Activated CD4-positive, alpha-beta T cell treated with anti-CD3 and anti-CD28 coated beads for 36 hours (primary cell): ENCODE measurements at regions of chr16 and their contacts with region 1.

Region 1: DNA sequence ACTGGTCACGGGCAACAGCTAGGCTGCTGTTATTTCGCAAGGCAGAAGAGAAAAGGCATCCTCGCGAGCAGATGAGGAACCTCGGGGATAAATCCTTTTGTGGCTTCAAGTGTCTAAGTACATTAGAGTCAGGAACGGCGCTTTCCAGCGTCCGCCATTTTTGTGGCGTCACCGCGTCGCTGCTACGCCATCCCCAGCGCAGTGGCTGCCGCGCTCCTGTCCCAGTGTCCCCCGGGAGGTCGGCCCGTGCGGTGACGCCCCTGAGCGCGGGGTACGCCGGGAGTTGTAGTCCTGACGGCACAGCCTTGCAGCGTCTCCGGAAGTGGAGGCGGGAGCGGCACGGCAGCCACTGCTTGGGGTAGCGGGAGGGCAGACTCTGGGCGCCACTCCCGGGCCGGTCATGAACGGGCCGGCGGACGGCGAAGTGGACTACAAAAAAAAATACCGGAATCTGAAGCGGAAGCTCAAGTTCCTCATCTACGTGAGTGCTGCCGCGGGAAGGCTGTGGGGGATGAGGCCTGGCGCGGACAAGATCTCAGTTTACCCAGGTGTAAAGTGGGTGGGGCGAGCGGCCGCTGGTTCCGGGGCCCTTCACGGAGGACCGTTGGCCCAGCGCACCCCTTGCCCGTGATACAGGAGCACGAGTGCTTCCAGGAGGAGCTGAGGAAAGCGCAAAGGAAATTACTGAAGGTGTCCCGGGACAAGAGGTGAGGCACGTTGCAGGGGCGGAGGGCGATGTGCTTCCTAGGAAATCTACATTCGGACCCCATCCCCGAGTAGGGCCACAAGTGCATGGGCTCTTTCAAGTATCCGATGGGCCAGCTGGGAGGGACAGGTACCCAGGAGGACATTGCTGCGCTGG is at the start of gene INO80E:
- DNase-seq: peak; percentile 100
- ATAC-seq: peak; percentile 98
- H3K4me3 Mint-ChIP-seq: peak within 1 kb of the TSS; percentile 96
- H3K27ac Mint-ChIP-seq: peak within 1 kb of the TSS; percentile 98
- H3K4me1 Mint-ChIP-seq: peaks cover 25% of the 10 kb centered on the region
- H3K27me3 Mint-ChIP-seq: no peaks in the 10 kb centered on the region
- total RNA-seq, gene INO80E: 80.1 to 106 TPM

Region 2: DNA sequence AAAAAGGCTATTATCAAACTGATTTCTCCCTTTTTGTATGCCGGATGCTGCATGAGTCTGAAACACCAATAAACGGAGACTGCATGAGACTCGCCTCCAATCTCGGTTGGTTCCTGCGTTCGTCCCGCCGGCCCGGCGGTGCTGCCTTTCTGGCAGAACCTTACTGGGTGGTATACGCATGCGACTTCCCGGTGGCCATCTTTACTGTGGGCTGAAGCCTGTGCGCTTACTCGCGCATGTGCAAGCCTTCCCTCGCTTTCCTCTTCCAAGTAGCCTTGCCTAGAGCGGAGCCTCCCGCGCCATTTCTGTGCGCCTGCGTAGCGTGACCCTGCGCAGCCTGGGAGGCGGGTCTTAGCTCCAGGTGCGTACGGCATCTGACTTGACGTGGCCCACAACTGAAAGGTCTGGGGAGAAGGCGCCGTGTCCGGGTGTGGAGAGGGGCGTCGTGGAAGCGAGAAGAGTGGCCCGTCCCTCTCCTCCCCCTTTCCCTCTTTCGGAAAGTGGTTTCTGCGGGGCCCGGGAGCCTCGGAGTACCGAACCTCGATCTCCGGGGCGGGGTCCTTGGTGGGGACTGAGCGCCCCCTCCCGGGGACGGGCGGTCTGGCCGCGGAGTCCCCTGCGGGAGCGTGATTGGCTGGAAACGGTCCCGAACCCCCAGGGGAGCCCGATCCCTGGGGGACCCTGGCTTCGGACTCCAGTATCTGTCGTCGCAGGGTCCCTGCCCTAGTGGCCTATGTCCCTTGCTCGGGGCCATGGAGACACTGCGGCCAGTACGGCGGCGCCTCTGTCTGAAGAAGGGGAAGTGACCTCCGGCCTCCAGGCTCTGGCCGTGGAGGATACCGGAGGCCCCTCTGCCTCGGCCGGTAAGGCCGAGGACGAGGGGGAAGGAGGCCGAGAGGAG is 180.1 kb before region 1 on chr16 and contains the start of gene PAGR1:
- CTCF ChIA-PET with region 1: no interaction called
- POLR2A ChIA-PET with region 1: interaction called, 3 read pairs
- intact Hi-C with region 1: loop called (anchors 1 to 10 kb)
- DNase-seq: peak; percentile 99
- ATAC-seq: peak; percentile 72
- H3K4me3 Mint-ChIP-seq: peak within 1 kb of the TSS; percentile 84
- H3K27ac Mint-ChIP-seq: peak within 1 kb of the TSS; percentile 97
- H3K4me1 Mint-ChIP-seq: peaks cover 57% of the 10 kb centered on the region
- H3K27me3 Mint-ChIP-seq: no peaks in the 10 kb centered on the region
- total RNA-seq, gene PAGR1: 20.6 to 25.6 TPM

Region 3: GRCh38 chr16:29900102-29900887 is 95.8 kb before region 1 on chr16 and contains the start of gene ASPHD1:
- CTCF ChIA-PET with region 1: no interaction called
- POLR2A ChIA-PET with region 1: no interaction called
- intact Hi-C with region 1: loop called in 1 of 2 experiments (anchors 1 kb)
- DNase-seq: peak; percentile 84
- ATAC-seq: peak; percentile 92
- H3K4me3 Mint-ChIP-seq: peak within 1 kb of the TSS; percentile 74
- H3K27ac Mint-ChIP-seq: peak within 1 kb of the TSS; percentile 38
- H3K4me1 Mint-ChIP-seq: peaks cover 13% of the 10 kb centered on the region
- H3K27me3 Mint-ChIP-seq: peaks cover 21% of the 10 kb centered on the region
- total RNA-seq, gene ASPHD1: 2.7 to 3.2 TPM

Region 4: DNA sequence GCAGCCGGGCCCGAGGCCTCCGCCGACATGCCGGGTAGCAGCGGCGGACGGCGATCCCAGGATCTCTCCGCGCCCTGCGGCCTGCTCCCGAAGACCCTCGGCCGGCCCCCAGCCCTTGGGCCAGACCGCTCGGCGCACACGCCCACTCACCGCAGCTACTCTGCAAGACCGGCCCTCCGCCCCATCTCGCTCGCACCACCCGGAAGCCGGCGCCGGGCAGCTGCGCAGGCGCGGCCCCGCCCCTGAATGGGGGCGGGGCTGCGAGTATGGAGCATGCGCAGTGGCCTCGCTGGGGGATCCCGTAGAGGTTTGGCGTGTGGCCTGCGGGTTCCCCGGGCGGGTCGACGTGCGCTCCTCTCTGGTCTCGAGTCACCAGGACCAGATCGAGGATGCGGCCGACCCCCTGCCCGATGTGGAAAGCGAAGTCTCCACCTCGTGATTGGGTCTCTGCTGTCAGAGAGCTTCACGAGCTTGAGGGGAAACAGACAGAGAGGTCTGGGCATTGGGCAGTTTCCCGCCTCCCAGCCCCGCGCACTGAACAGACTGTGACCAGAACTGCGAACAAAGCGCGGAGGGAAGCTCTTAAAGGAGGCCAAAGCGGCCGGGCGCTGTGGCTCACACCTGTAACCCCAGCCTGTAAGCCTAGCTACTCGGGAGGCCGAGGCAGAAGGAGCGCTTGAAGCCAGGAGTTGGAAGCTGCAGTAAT is 70.0 kb before region 1 on chr16 and contains the start of gene KCTD13:
- CTCF ChIA-PET with region 1: interaction called, 5 read pairs
- POLR2A ChIA-PET with region 1: interaction called, 6 read pairs
- intact Hi-C with region 1: loop called in 1 of 2 experiments (anchors 1 kb)
- DNase-seq: peak; percentile 92
- ATAC-seq: peak; percentile 90
- H3K4me3 Mint-ChIP-seq: peak within 1 kb of the TSS; percentile 82
- H3K27ac Mint-ChIP-seq: peak within 1 kb of the TSS; percentile 95
- H3K4me1 Mint-ChIP-seq: peaks cover 32% of the 10 kb centered on the region
- H3K27me3 Mint-ChIP-seq: no peaks in the 10 kb centered on the region
- total RNA-seq, gene KCTD13: 30.4 to 33.4 TPM

Region 5: GRCh38 chr16:29961479-29962343 is 34.4 kb before region 1 on chr16 and contains the start of gene TMEM219:
- CTCF ChIA-PET with region 1: no interaction called
- POLR2A ChIA-PET with region 1: no interaction called
- intact Hi-C with region 1: loop called in 1 of 2 experiments (anchors 1 kb)
- DNase-seq: peak; percentile 94
- ATAC-seq: peak; percentile 95
- H3K4me3 Mint-ChIP-seq: peak within 1 kb of the TSS; percentile 88
- H3K27ac Mint-ChIP-seq: peak within 1 kb of the TSS; percentile 87
- H3K4me1 Mint-ChIP-seq: peaks cover 17% of the 10 kb centered on the region
- H3K27me3 Mint-ChIP-seq: no peaks in the 10 kb centered on the region
- total RNA-seq, gene TMEM219: 34.6 to 42.5 TPM

Region 6: DNA sequence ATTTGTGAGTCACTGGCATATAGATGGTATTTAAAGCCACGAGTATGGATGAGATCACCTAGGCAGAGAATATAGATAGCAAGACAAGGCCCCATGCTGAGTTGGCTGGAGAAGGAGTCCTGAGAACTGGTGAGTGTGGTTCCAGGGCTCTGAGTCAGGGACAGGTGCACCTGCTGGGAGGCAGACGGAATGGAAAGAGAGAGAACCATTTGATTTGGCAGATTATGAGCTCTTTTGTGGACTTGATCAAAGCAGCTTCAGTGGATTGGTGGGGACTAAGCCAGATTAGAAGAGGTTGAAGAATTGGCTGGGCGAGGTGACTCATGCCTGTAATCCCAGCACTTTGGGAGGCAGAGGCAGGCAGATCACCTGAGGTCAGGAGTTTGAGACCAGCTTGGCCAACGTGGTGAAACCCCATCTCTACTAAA is 22.6 kb after region 1 on chr16:
- CTCF ChIA-PET with region 1: no interaction called
- POLR2A ChIA-PET with region 1: no interaction called
- intact Hi-C with region 1: loop called in 1 of 2 experiments (anchors 1 kb)
- DNase-seq: no peak
- ATAC-seq: peak; percentile 36
- H3K4me3 Mint-ChIP-seq: no peak overlapping the region
- H3K27ac Mint-ChIP-seq: no peak overlapping the region
- H3K4me1 Mint-ChIP-seq: peaks cover 7% of the 10 kb centered on the region
- H3K27me3 Mint-ChIP-seq: no peaks in the 10 kb centered on the region

Region 7: DNA sequence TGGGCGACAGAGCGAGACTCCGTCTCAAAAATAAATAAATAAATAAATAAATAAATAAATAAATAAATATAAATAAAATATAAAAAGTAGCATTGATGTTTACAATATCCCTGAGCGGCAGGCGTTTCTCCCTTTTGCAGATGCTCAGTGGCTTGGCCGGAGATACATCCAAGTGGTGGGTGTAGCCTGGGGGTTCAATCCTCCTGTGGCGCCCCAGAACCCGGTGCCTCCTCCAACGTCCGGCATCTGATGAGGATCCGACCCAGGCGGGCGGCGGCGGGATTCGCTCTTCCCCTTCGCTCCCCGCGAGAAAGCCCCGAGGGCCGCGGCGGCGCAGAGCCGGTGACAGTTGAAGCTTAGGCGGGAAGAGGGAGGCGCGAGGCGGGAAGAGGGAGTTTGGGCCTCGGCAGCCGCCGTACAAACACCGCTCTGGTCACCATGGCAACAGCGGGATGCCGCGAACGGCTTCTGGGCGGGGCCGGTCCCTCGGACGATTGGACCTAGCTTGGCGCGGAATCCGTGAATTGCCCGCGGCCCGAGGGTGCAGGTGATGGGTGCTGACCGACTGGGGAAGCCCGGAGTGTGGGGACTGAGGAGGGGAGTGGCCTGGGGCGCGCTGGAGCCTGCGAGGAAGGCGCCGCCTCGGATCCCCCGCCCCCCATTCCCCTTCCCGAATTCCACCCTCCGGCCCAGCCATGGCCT is 56.7 kb after region 1 on chr16:
- CTCF ChIA-PET with region 1: interaction called, 3 read pairs
- POLR2A ChIA-PET with region 1: no interaction called
- intact Hi-C with region 1: loop called in 1 of 2 experiments (anchors 1 kb)
- DNase-seq: peak; percentile 95
- ATAC-seq: peak; percentile 69
- H3K4me3 Mint-ChIP-seq: peak overlapping the region; percentile 78
- H3K27ac Mint-ChIP-seq: peak overlapping the region; percentile 72
- H3K4me1 Mint-ChIP-seq: peaks cover 25% of the 10 kb centered on the region
- H3K27me3 Mint-ChIP-seq: peaks cover 2% of the 10 kb centered on the region